ENCODE measurements at regions of chr13 and their contacts with region 1.

Region 1: GRCh38 chr13:30685320-30685859 is 50.0 kb upstream of the ALOX5AP start:
- DNase-seq: no peak
- H3K4me3 ChIP-seq: no peak overlapping the region
- H3K27ac ChIP-seq: no peak overlapping the region
- H3K4me1 ChIP-seq: peaks cover 0 to 15% (median 10%) of the 10 kb centered on the region in 4 donors
- H3K27me3 ChIP-seq: no peaks in the 10 kb centered on the region
- CTCF ChIP-seq: no peak
- EP300 ChIP-seq: no peak
- POLR2A ChIP-seq: no peak

Region 2: DNA sequence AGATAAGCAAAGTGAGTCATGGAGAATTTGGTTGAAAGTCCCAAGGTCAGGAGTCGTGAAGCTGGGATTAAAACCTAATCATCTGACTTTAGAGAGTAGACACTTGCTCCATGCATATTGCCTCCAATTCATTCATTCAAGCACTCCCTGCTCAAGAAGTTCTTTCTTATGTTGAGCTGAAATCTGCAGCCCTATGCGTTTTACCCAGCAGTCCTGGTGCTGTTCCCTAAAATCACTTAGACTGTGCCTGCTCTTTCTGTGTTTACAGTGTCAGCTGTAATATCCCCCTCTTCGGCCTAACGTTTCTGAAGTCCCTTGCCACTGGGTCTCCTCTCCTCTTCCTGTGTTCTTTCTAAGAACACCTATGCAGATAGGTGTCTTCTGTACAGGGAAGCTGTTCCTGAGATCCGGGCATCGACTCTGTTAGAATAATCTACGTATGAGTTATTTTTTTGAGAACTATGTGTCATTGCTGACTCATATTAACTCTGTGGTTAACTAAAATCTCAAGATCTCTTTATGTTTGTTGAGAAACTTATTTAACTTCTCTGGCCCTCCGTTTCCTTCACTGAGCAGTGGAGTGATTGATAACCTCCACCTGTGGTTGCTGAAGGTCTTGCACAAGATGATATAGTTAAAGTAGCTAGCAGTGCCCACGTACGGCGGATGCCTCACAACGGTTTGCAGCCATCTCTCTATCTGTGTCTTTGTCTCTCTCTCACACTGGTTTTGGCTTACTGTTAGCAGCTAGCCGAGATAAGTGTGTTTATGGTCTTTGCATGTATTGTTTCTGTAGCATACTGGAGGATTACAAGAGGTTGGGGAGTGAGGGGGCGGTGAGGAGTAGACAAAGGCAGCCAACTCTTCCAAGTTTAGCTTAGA is 54.6 kb after region 1 on chr13:
- intact Hi-C with region 1: no loop called
- DNase-seq: no peak
- H3K4me3 ChIP-seq: no peak overlapping the region
- H3K27ac ChIP-seq: peak overlapping the region in 2 of 4 donors; percentile 2 to 40
- H3K4me1 ChIP-seq: peaks cover 0 to 27% (median 20%) of the 10 kb centered on the region in 4 donors
- H3K27me3 ChIP-seq: no peaks in the 10 kb centered on the region
- CTCF ChIP-seq: no peak
- EP300 ChIP-seq: no peak
- POLR2A ChIP-seq: no peak

Region 3: GRCh38 chr13:30796132-30796572 is 110.8 kb after region 1 on chr13:
- intact Hi-C with region 1: loop called (anchors 5 kb)
- DNase-seq: peak; percentile 62
- H3K4me3 ChIP-seq: peak overlapping the region in 3 of 4 donors; percentile 28 to 36 (median 33)
- H3K27ac ChIP-seq: peak overlapping the region in 3 of 4 donors; percentile 23 to 66 (median 60)
- H3K4me1 ChIP-seq: peaks cover 0 to 36% (median 31%) of the 10 kb centered on the region in 4 donors
- H3K27me3 ChIP-seq: no peaks in the 10 kb centered on the region
- CTCF ChIP-seq: no peak
- EP300 ChIP-seq: no peak
- POLR2A ChIP-seq: no peak